Aorta (tissue), 5 donors: ENCODE measurements at regions of chr17 and their contacts with region 1.

Region 1: GRCh38 chr17:35022536-35023063 is 40.9 kb downstream of the RFFL start:
- DNase-seq: peak; percentile 91 to 92
- ATAC-seq: peak; percentile 92
- H3K4me3 ChIP-seq: no peak overlapping the region
- H3K27ac ChIP-seq: peak overlapping the region; percentile 46 to 85
- H3K4me1 ChIP-seq: peaks cover 2 to 4% of the 10 kb centered on the region in 2 donors
- H3K27me3 ChIP-seq: no peaks in the 10 kb centered on the region

Region 2: DNA sequence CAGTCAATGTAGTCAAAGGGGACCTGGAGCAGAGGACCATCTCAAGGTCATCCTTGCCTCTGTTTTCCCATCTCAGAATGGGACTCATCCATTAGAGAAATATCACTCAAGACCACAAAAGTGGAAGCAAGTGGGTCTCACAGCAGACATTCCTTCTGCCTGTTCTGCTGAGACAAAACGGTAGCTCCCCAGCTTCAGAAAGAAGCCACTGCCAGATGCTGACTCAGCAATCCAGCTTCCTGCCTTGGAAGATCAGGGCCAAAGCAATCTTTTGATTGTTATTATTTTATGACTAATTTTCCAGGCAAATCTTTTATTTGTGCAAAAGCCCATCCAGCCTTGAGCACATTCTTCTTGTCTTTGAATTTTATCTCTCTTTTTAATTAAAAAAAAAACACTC is 148.1 kb before region 1 on chr17:
- intact Hi-C with region 1: no loop called
- DNase-seq: no peak
- ATAC-seq: no peak
- H3K4me3 ChIP-seq: no peak overlapping the region
- H3K27ac ChIP-seq: no peak overlapping the region
- H3K4me1 ChIP-seq: no peaks in the 10 kb centered on the region
- H3K27me3 ChIP-seq: no peaks in the 10 kb centered on the region

Region 3: DNA sequence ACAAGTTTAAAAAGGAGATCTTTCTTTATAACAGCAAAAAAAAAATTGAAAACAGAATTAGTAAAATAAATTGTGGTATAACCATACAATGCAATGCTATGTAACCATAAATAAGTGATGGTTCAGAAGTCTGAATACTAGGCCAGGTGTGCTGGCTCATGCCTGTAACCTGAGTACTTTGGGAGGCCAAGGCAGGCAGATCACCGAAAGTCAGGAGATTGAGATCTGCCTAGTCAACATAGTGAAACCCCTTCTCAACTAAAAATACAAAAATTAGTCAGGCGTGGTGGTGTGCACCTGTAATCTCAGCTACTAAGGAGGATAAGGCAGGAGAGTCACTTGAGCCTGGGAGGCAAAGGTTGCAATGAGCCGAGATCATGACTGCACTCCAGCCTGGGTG is 95.9 kb before region 1 on chr17:
- intact Hi-C with region 1: no loop called
- DNase-seq: no peak
- ATAC-seq: no peak
- H3K4me3 ChIP-seq: no peak overlapping the region
- H3K27ac ChIP-seq: no peak overlapping the region
- H3K4me1 ChIP-seq: no peaks in the 10 kb centered on the region
- H3K27me3 ChIP-seq: no peaks in the 10 kb centered on the region

Region 4: DNA sequence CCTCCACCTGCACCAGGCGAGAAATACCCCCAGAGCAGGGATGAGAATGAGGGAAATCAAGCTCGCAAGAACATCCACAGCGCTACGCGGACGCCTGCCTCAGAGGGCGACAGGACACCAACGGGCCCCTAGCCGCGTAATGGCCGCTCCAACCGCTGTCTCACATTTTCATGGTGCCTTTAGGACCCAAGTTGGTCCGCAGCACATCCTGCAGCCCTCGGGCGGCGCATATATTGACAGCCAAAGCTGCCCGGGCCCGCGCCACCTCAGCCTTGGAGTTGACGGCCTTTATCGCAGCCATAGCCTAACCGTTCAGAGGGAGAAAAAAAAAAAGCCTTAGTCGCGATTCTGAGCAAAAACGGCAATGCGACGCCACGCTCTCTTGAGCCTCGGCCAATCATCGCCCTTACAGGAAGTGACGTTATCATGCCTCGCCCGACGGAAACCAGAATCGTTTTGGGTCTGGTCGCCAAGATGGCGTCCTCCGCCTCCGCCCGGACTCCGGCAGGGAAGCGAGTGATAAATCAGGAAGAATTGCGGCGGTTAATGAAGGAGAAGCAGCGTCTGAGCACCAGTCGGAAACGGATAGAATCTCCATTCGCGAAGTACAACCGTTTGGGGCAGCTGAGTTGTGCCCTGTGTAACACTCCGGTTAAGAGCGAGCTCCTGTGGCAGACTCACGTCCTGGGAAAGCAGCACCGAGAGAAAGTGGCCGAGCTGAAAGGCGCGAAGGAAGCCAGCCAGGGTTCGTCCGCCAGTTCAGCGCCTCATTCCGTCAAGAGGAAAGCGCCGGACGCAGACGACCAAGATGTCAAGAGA is 61.3 kb before region 1 on chr17 and contains the starts of genes CCT6B and ZNF830:
- intact Hi-C with region 1: loop called in 1 of 2 experiments (anchors 5 kb)
- DNase-seq: peak; percentile 95 to 96
- ATAC-seq: peak; percentile 98
- H3K4me3 ChIP-seq: peak within 1 kb of the TSS; percentile 75 to 78
- H3K27ac ChIP-seq: peak within 1 kb of the TSS; percentile 69 to 98
- H3K4me1 ChIP-seq: peaks cover 3 to 6% of the 10 kb centered on the region in 2 donors
- H3K27me3 ChIP-seq: no peaks in the 10 kb centered on the region
- total RNA-seq, gene CCT6B: 1.9 to 2.4 TPM
- total RNA-seq, gene ZNF830: 12.9 to 14.5 TPM

Region 5: DNA sequence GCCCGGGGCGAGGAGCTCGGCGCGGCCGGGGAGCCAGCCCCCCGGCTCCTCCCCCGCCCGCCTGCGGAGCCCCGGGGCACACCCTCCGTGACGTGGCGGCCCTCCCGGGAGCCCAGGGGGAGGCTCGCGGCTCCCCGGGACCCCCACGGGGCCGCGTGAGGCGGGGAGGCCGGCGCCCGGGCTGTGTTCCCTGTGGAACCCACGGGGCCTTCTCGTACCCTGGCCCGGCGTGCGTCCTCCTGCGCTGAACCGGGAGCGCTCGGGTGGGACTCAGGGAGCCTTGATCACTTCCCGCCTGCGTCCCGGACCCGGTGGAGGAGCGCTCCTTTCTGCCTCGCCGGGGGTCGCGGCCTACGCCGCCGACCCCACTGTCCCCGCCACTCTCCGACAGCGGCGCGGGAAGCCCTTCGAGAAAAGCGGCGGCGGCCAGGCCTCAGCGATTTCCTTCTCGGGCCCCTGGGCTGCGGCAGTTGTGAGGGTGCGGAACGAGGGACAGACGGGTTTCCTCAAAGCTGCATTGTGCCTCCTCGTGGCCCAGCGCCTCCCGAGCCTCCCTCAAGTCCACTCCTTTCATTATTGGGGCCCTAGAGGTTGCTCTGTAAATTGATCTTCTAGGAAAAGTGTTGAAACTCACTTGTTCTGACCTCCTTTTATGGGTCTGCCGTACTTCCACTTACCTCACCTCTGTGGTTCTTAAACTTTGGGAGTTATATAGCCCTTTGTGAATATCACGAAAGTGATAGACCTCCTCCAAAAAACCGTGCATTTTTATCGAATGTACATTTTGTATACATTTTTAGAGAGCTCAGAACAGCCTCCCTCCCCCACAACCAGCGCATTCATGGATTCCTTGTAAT is 41.7 kb before region 1 on chr17:
- intact Hi-C with region 1: loop called (anchors 5 kb)
- DNase-seq: peak; percentile 85 to 93
- ATAC-seq: peak; percentile 95
- H3K4me3 ChIP-seq: peak overlapping the region; percentile 75 to 98
- H3K27ac ChIP-seq: peak overlapping the region; percentile 93 to 99
- H3K4me1 ChIP-seq: peaks cover 0 to 2% of the 10 kb centered on the region in 2 donors
- H3K27me3 ChIP-seq: no peaks in the 10 kb centered on the region

Region 6: DNA sequence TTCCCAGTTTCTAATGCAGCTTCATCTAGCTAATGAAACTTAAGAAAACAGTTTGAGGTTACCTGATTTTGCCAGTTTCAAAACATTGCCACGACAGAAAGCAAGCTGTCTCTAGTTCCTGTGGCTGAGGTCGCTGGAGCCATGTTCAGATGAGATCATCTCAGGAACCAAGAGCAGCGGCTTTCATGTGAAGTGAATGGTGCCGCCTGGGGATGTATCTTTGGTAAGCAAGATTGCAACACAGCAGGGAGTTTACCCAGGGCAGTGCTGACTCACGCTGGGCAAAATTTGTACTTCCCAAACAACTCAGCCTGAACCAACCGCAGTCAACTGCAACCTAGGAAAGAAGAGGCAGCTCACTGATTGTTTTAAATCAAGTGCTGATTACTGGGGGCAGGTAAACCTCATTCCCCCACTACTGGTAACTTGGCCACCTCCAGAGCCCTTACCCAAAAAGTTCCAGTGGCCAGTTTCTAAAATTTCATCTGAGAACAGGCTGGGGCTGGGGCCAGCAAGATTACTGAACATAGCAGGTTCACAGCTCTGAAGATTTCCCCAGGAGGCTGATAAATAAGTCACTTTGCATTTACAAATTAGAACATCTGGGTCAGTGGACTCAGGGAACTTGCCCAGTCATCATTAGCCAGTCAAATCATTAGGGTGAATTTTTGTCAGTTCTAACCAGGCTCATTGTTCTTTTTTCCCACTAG is 41.1 kb after region 1 on chr17 and contains the start of gene RFFL:
- intact Hi-C with region 1: loop called in 1 of 2 experiments (anchors 5 kb)
- DNase-seq: peak; percentile 87 to 93
- ATAC-seq: peak; percentile 97
- H3K4me3 ChIP-seq: no peak within 1 kb of the TSS
- H3K27ac ChIP-seq: peak within 1 kb of the TSS; percentile 9 to 50
- H3K4me1 ChIP-seq: no peaks in the 10 kb centered on the region
- H3K27me3 ChIP-seq: no peaks in the 10 kb centered on the region
- total RNA-seq, gene RFFL: 25.0 to 25.1 TPM